PC-9 (cell line): ENCODE measurements at regions of chr20 and their contacts with region 1.

Region 1: DNA sequence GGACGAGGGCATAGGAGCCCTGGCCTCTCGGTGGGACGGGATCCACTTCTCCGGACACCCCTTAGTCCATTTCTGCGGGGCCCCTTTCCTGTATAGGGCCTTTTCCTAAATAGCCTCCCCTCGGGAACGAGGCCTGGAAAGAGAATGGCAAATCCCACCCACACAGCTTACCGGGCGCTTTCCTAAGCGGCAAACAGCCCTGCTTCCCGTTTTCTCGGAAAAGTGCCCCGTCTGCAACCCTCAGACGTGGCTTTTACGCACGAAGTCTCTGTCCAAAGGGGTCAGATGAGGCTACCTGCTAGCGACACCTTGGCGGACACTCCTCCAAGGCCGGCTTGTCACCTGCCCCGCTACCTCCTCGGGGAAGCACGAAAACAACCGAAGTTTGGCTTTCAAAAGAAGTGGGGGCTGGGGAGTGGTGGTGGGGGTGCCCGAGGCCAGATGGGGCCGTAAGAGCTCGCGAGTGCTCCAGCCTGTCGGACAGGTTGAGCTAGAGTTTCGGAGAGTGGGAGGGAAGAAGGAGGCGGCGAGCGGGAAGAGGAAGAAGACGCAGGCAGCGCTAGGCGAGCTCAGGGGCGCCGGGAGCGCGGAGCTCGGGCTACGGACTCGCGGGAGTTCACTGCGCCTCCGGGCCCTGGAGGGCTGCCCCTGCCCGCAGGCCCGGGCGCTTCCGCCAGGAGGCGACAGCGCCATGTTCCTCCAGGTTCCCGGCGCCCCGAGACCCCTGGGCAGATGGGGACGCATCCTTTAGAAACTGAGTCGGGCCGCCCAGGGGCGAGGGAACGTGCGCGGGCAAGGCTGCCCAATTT is 768 bp downstream of the TFAP2C start:
- DNase-seq: peak; percentile 92 to 94
- H3K4me3 ChIP-seq: peak overlapping the region; percentile 100
- H3K27ac ChIP-seq: peak overlapping the region; percentile 70
- H3K4me1 ChIP-seq: peaks cover 54% of the 10 kb centered on the region
- H3K27me3 ChIP-seq: no peaks in the 10 kb centered on the region
- CTCF ChIP-seq: peak; percentile 94

Region 2: DNA sequence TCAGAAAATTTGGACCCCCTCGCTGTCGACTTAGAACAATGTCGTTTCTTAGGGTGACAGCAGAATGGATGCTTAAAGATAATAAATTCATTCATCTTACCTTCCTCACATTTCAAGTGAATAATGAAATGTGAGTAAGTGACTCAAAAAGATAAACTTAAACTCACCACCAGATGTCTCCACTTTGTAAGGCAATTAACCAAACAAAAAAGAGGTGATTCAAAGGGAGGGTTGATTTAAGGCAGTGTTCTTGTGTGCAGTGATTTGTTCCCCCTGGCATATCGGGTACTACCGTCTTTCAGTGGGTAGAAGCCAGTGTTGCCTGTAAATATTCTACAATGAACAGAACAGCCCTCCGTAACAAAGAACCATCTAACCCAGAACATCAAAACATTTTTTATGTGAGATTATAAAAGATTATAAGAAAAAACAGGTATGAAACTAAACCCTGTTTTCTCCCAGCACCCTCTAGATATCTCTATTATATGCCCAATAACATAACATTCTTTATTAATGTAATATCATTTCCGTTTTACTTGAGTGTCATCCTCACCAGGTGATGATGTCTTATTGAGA is 1214.2 kb before region 1 on chr20:
- CTCF ChIA-PET with region 1: no interaction called
- POLR2A ChIA-PET with region 1: no interaction called
- intact Hi-C with region 1: no loop called
- DNase-seq: no peak
- H3K4me3 ChIP-seq: no peak overlapping the region
- H3K27ac ChIP-seq: no peak overlapping the region
- H3K4me1 ChIP-seq: no peaks in the 10 kb centered on the region
- H3K27me3 ChIP-seq: peaks cover 7% of the 10 kb centered on the region
- CTCF ChIP-seq: peak; percentile 61; the same call in 1 of the 2 replicates

Region 3: GRCh38 chr20:56348308-56348700 is 281.6 kb before region 1 on chr20:
- CTCF ChIA-PET with region 1: no interaction called
- POLR2A ChIA-PET with region 1: no interaction called
- intact Hi-C with region 1: no loop called
- DNase-seq: no peak
- H3K4me3 ChIP-seq: no peak overlapping the region
- H3K27ac ChIP-seq: no peak overlapping the region
- H3K4me1 ChIP-seq: no peaks in the 10 kb centered on the region
- H3K27me3 ChIP-seq: peaks cover 90% of the 10 kb centered on the region
- CTCF ChIP-seq: no peak

Region 4: GRCh38 chr20:56592817-56593216 is 37.1 kb before region 1 on chr20:
- CTCF ChIA-PET with region 1: no interaction called
- POLR2A ChIA-PET with region 1: interaction called, 3 read pairs
- intact Hi-C with region 1: loop called (anchors 1 kb)
- DNase-seq: no peak
- H3K4me3 ChIP-seq: no peak overlapping the region; the same call in 1 of the 2 replicates
- H3K27ac ChIP-seq: peak overlapping the region; percentile 84
- H3K4me1 ChIP-seq: peaks cover 52% of the 10 kb centered on the region
- H3K27me3 ChIP-seq: no peaks in the 10 kb centered on the region
- CTCF ChIP-seq: no peak

Region 5: DNA sequence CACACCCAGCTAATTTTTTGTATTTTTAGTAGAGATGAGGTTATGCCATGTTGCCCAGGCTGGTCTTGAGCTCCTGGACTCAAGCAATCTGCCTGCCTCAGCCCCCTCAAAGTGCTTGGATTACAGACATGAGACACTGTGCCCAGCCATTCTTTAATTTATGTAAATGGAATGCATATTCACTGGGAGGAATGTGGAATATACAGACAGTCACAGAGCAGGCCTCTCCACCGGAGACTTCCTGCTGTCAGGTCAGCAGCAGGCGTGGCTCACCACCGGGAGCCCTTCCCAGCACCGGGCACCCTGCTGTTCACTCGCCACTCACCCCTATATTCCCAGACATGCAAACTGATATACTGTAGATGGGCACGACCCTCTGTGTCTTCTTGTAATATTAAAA is 82.3 kb after region 1 on chr20:
- CTCF ChIA-PET with region 1: no interaction called
- POLR2A ChIA-PET with region 1: interaction called, 3 read pairs
- intact Hi-C with region 1: loop called (anchors 1 kb)
- DNase-seq: peak; percentile 73 to 88
- H3K4me3 ChIP-seq: no peak overlapping the region
- H3K27ac ChIP-seq: peak overlapping the region; percentile 64
- H3K4me1 ChIP-seq: peaks cover 20% of the 10 kb centered on the region
- H3K27me3 ChIP-seq: no peaks in the 10 kb centered on the region
- CTCF ChIP-seq: no peak

Region 6: DNA sequence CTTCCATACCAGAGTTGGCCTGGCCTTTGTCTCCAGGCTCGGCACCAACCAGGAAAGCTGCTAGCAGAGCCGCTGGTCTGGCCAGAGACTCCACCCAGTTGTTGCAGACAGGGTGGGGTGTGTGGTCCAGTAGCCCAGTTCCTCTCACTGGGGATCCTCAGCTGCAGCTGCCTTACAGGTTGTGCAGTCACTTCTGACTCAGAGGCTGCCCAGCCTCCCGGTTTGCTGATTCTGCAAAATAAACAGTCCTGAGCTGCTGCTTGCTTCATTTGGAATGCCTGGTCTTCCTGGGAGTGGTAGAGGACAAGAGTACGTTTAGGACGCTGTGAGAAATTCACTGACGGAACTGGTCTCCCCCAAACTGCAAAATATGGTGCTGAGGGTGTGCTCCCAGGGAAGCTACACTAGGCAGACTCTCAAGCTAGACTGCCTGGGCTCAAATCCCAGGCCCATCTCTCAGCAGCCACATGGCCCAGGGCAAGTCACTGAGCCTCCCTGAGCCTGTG is 245.2 kb after region 1 on chr20:
- CTCF ChIA-PET with region 1: no interaction called
- POLR2A ChIA-PET with region 1: no interaction called
- intact Hi-C with region 1: loop called (anchors 10 kb)
- DNase-seq: peak; percentile 84 to 93
- H3K4me3 ChIP-seq: no peak overlapping the region
- H3K27ac ChIP-seq: peak overlapping the region; percentile 48; the same call in 1 of the 2 replicates
- H3K4me1 ChIP-seq: peaks cover 13% of the 10 kb centered on the region
- H3K27me3 ChIP-seq: no peaks in the 10 kb centered on the region
- CTCF ChIP-seq: no peak

Region 7: DNA sequence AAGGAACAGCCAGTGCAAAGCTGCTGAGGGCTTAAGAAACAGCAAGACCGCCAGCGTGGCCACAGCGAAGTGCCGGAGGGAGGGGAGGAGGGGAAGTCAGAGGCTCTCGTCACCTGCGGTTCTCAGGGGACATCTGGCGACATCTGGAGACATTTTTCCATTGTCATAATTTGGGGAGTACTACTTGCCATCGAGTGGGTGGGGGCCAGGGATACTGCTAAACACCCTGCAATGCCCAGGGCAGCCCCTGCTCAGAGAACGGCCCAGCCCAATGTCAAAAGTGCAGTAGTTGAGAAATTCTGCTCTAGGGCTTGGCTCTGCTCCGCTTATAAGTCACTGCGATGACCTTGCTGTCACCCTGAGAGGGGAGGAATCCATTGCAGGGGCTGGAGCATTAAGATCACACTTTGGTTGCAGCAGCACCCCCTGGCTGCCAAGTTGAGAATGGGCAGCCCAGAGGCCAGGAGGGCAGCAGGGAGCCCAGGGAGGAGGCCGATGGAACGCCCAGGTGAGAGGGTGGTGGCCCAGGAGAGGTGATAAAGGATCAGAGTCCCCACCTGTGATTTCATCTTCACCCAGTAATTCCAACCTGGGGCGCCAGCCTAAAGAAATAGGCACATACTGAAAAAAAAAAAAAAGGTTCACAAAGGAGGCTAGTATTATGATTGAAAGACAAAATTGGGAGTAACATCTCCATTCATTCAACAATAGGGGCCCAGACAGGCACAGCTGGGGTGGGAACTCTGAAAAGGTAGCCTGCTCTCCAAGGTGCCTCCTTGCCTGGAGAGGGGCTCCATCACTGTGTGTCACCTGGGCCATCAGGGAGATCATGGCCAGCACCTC is 418.4 kb after region 1 on chr20:
- CTCF ChIA-PET with region 1: no interaction called
- POLR2A ChIA-PET with region 1: no interaction called
- intact Hi-C with region 1: loop called (anchors 5 kb)
- DNase-seq: peak; percentile 47 to 89
- H3K4me3 ChIP-seq: peak overlapping the region; percentile 34; the same call in 1 of the 2 replicates
- H3K27ac ChIP-seq: peak overlapping the region; percentile 85
- H3K4me1 ChIP-seq: peaks cover 27% of the 10 kb centered on the region
- H3K27me3 ChIP-seq: no peaks in the 10 kb centered on the region
- CTCF ChIP-seq: peak; percentile 95